Breast epithelium (tissue), 4 donors: ENCODE measurements at regions of chr5 and their contacts with region 1.

Region 1: DNA sequence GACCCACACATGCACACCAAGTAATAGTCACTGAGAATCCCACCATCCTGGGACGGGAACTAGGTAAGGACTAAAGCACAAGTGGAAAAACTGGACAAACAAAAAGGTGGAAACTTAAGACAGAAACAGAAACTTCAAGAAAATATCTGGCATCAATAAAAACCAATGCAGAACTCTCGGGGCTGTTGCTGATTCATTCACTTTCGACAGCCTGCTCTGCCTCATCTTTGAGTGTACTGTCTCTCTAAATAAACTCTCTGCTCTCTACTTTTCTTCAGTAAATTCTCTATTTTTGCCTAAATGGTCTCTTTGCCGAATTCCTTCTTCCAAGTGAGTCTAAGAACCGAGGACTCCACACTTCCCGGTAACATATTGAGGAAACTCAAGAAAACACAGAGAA is 116.9 kb downstream of the CDH9 start:
- DNase-seq: no peak
- H3K4me3 ChIP-seq: no peak overlapping the region
- H3K27ac ChIP-seq: no peak overlapping the region
- H3K4me1 ChIP-seq: no peaks in the 10 kb centered on the region
- H3K27me3 ChIP-seq: no peaks in the 10 kb centered on the region
- CTCF ChIP-seq: no peak
- POLR2A ChIP-seq: no peak

Region 2: GRCh38 chr5:26622947-26623346 is 298.5 kb before region 1 on chr5:
- intact Hi-C with region 1: no loop called
- DNase-seq: no peak
- H3K4me3 ChIP-seq: no peak overlapping the region
- H3K27ac ChIP-seq: no peak overlapping the region
- H3K4me1 ChIP-seq: no peaks in the 10 kb centered on the region
- H3K27me3 ChIP-seq: no peaks in the 10 kb centered on the region
- CTCF ChIP-seq: no peak
- POLR2A ChIP-seq: no peak

Region 3: GRCh38 chr5:26864050-26864449 is 57.4 kb before region 1 on chr5:
- intact Hi-C with region 1: no loop called
- DNase-seq: no peak
- H3K4me3 ChIP-seq: no peak overlapping the region
- H3K27ac ChIP-seq: no peak overlapping the region
- H3K4me1 ChIP-seq: no peaks in the 10 kb centered on the region
- H3K27me3 ChIP-seq: no peaks in the 10 kb centered on the region
- CTCF ChIP-seq: no peak
- POLR2A ChIP-seq: no peak

Region 4: GRCh38 chr5:26884481-26884880 is 37.0 kb before region 1 on chr5:
- intact Hi-C with region 1: no loop called
- DNase-seq: no peak
- H3K4me3 ChIP-seq: no peak overlapping the region
- H3K27ac ChIP-seq: no peak overlapping the region
- H3K4me1 ChIP-seq: no peaks in the 10 kb centered on the region
- H3K27me3 ChIP-seq: no peaks in the 10 kb centered on the region
- CTCF ChIP-seq: no peak
- POLR2A ChIP-seq: no peak

Region 5: GRCh38 chr5:27252911-27253310 is 331.5 kb after region 1 on chr5:
- intact Hi-C with region 1: loop called (anchors 10 kb)
- DNase-seq: no peak
- H3K4me3 ChIP-seq: no peak overlapping the region
- H3K27ac ChIP-seq: no peak overlapping the region
- H3K4me1 ChIP-seq: no peaks in the 10 kb centered on the region
- H3K27me3 ChIP-seq: no peaks in the 10 kb centered on the region
- CTCF ChIP-seq: no peak
- POLR2A ChIP-seq: no peak

Region 6: DNA sequence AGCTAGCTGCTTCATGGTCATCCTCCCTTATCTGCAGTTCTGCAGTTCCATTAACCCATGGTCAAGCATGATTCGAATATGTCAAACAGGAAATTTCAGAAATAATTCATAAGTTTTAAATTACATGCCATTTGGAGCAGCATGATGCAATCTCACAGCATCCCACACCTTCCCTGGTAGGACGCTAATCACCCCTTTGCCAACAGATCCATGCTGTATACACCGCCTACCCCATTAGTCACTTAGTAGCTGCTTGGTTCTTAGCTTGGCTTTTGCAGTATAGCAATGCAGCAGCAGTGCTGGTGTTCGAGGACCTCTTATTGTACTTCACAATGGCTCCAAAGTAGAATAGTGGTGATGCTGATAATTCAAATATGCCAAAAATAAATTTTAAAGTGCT is 856.7 kb after region 1 on chr5:
- intact Hi-C with region 1: no loop called
- DNase-seq: no peak
- H3K4me3 ChIP-seq: no peak overlapping the region
- H3K27ac ChIP-seq: no peak overlapping the region
- H3K4me1 ChIP-seq: no peaks in the 10 kb centered on the region
- H3K27me3 ChIP-seq: no peaks in the 10 kb centered on the region
- CTCF ChIP-seq: no peak
- POLR2A ChIP-seq: no peak